Aorta (tissue), 5 donors: ENCODE measurements at regions of chr15 and their contacts with region 1.

Region 1: DNA sequence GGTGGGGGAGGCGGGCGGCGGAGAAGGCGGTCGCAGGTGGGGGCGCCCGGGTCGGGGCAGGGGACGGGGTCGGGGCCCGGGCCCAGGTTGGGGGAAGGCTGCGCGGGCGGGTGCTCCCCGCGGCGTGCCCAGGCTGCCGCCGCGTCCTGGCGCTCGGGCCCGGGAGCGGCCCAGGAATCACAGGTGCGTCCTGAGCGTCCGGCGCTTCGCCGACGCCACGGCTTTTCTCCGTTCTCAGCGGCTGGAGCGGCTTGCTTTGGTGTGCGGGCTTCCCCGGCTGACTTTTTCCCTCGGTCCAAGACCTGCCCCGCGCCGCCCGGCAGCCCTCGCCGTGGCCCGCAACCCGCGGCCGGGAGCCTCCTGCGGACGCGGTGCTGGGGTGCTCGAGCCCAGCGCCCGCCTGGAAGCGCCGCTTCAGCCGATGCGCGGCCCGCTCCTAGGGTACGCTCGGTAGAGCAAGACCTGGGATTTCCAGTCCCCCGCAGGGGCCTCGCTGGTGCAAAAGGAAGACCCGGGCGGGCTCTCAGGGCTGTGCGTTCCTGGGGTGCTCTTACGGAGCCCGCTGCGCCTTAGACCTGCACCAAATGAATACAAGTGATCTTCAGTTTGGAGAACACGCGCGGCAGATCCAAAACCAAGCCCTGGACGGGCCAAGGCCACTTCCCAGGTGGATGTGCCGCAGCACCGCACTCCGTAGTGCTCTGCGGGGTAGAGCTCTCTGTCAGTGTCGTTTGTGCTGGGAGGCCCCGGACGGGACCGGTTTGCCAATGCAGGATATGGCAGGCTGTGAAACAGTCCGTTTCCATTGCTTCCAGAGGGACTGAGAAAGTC is 639 bp downstream of the NIPA1 start:
- DNase-seq: peak in 1 of 2 donors; percentile 77
- ATAC-seq: no peak
- H3K4me3 ChIP-seq: peak overlapping the region; percentile 75
- H3K27ac ChIP-seq: peak overlapping the region in 1 of 2 donors; percentile 14
- H3K4me1 ChIP-seq: no peaks in the 10 kb centered on the region
- H3K27me3 ChIP-seq: no peaks in the 10 kb centered on the region

Region 2: DNA sequence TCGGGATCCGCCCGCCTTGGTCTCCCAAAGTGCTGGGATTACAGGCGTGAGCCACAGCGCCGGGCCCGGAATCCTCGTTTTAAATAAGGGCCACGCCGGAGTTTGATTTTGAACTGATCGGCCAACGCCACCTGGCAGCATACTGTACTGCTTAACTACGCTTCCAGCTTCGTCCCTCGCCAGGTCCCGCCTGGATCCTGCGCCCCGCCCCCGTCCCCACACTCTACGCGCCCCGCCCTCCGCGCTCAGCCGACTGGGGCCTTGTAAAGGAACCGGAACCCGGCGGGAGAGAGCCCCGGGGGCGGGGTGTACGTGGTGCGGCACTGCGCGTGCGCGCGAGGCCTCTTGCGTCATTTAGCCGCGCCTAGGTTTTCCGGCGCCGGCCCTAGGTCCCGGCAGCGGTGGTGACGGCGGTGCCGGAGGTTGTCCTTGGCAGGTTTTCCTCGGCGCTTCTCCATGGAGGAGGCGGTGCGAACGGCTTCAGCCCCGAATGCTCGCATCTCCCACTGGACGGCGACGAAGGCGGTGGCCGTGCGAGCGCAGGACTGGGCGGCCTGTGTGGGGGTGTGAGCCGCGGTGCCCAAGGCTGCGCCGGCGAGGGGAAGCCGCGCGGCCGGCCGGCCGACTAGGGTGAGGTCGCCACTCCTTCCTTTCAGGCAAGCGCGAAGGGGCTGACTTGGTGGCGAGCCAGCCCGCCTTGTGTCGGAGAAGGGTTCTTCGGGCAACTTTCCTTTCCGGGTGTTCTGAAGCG is 51.4 kb after region 1 on chr15 and contains the start of gene NIPA2:
- intact Hi-C with region 1: loop called (anchors 5 kb)
- DNase-seq: peak; percentile 99 to 100
- ATAC-seq: peak; percentile 99
- H3K4me3 ChIP-seq: peak within 1 kb of the TSS; percentile 67 to 85
- H3K27ac ChIP-seq: peak within 1 kb of the TSS; percentile 63 to 83
- H3K4me1 ChIP-seq: no peaks in the 10 kb centered on the region
- H3K27me3 ChIP-seq: no peaks in the 10 kb centered on the region
- total RNA-seq, gene NIPA2: 28.3 to 30.1 TPM

Region 3: GRCh38 chr15:22936577-22937472 is 149.7 kb after region 1 on chr15:
- intact Hi-C with region 1: no loop called
- DNase-seq: no peak
- ATAC-seq: no peak
- H3K4me3 ChIP-seq: no peak overlapping the region
- H3K27ac ChIP-seq: no peak overlapping the region
- H3K4me1 ChIP-seq: no peaks in the 10 kb centered on the region
- H3K27me3 ChIP-seq: no peaks in the 10 kb centered on the region

Region 4: DNA sequence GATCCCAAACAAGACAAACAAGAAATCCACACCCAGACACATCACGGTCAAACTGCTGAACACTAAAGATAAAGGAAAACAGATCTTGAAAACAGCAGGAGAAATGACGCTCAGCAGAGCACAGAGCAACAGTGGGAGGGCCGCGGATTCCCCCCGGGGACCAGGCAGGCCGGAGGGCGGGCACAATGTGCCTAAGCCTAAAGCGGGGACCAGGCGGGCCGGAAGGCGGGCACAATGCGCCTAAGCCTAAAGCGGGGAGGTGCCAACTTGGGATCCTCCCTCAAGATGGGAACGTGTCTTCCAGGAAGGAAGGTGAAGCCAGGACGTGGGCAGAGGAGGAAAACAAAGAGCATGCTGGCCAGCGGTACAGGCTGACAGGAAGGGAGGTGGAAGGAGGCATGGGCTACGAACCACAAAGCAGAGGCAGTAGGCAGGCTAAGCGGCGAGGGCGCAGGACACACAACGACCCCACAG is 162.0 kb after region 1 on chr15:
- intact Hi-C with region 1: loop called in 1 of 2 experiments (anchors 10 kb)
- DNase-seq: peak; percentile 71 to 92
- ATAC-seq: peak; percentile 83
- H3K4me3 ChIP-seq: no peak overlapping the region
- H3K27ac ChIP-seq: peak overlapping the region in 1 of 2 donors; percentile 35
- H3K4me1 ChIP-seq: no peaks in the 10 kb centered on the region
- H3K27me3 ChIP-seq: no peaks in the 10 kb centered on the region